ENCODE measurements at regions of chr18 and their contacts with region 1.

Region 1: GRCh38 chr18:31424383-31424988 is 23.1 kb upstream of the DSG3 start:
- DNase-seq: peak; percentile 57
- H3K4me3 ChIP-seq: no peak overlapping the region
- H3K27ac ChIP-seq: no peak overlapping the region
- H3K4me1 ChIP-seq: no peaks in the 10 kb centered on the region
- H3K27me3 ChIP-seq: no peaks in the 10 kb centered on the region
- CTCF ChIP-seq: peak; percentile 59

Region 2: DNA sequence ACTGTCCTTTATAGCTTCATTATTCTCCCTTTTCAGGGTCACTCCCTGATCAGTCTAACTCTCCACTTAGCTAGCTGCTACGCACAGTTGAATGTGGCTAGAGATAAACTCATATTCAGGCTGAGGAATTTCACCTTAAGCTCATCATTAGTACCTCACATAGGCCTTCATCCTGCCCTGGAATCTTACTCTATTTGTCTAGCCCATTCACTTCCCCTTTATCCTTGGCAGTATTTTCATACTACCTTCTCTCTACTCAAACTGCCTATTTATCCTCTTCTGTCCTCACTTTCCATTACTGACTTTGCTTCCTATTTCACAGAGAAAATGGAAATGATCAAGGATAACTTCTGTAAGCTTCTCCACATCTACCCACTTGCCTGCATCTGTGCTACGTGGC is 311.7 kb before region 1 on chr18:
- intact Hi-C with region 1: loop called (anchors 10 kb)
- DNase-seq: no peak
- H3K4me3 ChIP-seq: no peak overlapping the region
- H3K27ac ChIP-seq: no peak overlapping the region
- H3K4me1 ChIP-seq: no peaks in the 10 kb centered on the region
- H3K27me3 ChIP-seq: no peaks in the 10 kb centered on the region
- CTCF ChIP-seq: no peak

Region 3: GRCh38 chr18:31506024-31506742 is 81.7 kb after region 1 on chr18:
- intact Hi-C with region 1: loop called (anchors 10 kb)
- DNase-seq: no peak
- H3K4me3 ChIP-seq: no peak overlapping the region
- H3K27ac ChIP-seq: no peak overlapping the region
- H3K4me1 ChIP-seq: peaks cover 4% of the 10 kb centered on the region
- H3K27me3 ChIP-seq: no peaks in the 10 kb centered on the region
- CTCF ChIP-seq: peak; percentile 22